Mammary epithelial cell (primary cell): ENCODE measurements at regions of chr1 and their contacts with region 1.

Region 1: GRCh38 chr1:46132529-46133180 is at the start of gene PIK3R3:
- DNase-seq: peak; percentile 99
- H3K4me3 ChIP-seq: peak within 1 kb of the TSS; percentile 76 to 99 (median 78)
- H3K27ac ChIP-seq: peak within 1 kb of the TSS; percentile 91
- H3K4me1 ChIP-seq: peaks cover 26% of the 10 kb centered on the region
- H3K27me3 ChIP-seq: no peaks in the 10 kb centered on the region
- CTCF ChIP-seq: no peak
- total RNA-seq, gene PIK3R3: 12.8 to 13.8 TPM

Region 2: GRCh38 chr1:45767035-45767434 is 365.6 kb before region 1 on chr1:
- CTCF ChIA-PET with region 1: no interaction called
- dilution Hi-C with region 1: no loop called
- in situ Hi-C with region 1: no loop called
- intact Hi-C with region 1: no loop called
- DNase-seq: no peak
- H3K4me3 ChIP-seq: no peak overlapping the region
- H3K27ac ChIP-seq: no peak overlapping the region
- H3K4me1 ChIP-seq: peaks cover 6% of the 10 kb centered on the region
- H3K27me3 ChIP-seq: no peaks in the 10 kb centered on the region
- CTCF ChIP-seq: no peak

Region 3: DNA sequence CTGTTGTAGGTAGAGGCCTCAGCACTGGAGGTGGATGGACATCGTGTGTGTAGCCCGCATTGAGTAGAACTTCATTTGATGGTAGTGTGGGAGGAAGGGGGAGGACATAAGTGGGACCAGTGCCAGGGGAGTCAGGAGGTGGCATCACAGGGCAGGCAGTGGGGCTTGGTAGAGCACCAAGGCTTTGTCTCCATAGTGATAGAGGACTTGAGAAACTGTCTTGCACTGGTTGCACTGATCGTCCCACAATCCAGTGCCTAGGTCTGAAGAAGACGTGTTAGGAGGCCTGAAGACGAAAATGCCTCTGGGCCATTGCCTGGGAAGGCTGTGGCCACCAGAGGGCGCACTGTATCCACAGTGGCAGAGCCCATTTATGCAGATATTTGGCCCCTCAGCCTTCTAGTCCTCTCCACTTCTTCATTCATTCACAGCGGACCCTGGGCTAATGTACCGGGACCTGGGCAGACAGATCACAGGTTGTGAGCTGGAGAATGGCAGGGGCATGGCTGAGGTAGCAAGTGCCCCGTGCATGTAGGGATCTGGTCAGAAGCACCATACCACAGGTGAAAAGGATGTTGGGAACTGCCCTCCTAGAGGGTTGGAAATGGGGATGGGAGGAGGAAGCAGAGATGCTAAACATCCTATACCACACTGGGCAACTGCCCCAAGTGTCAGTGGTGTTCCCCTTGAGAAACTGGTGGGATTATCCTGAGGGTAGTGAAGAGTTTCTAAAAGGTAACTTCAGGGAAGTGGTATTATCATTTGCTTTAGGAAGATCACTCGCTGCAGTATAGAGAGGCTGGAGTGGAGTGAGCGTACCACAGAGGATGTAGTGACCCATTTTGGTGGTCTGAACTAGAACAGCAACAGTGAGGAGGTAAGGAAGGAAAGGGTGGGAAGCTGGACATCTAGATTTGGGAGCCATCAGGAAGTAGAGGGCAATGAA is 95.5 kb before region 1 on chr1:
- CTCF ChIA-PET with region 1: no interaction called
- dilution Hi-C with region 1: loop called (anchors 5 kb)
- in situ Hi-C with region 1: no loop called
- intact Hi-C with region 1: loop called (anchors 1 kb)
- DNase-seq: peak; percentile 65
- H3K4me3 ChIP-seq: no peak overlapping the region
- H3K27ac ChIP-seq: no peak overlapping the region
- H3K4me1 ChIP-seq: peaks cover 8% of the 10 kb centered on the region
- H3K27me3 ChIP-seq: no peaks in the 10 kb centered on the region
- CTCF ChIP-seq: peak; percentile 96 to 98

Region 4: GRCh38 chr1:46043458-46044017 is 89.1 kb before region 1 on chr1:
- CTCF ChIA-PET with region 1: no interaction called
- dilution Hi-C with region 1: loop called (anchors 5 kb)
- in situ Hi-C with region 1: no loop called
- intact Hi-C with region 1: no loop called
- DNase-seq: no peak
- H3K4me3 ChIP-seq: no peak overlapping the region
- H3K27ac ChIP-seq: no peak overlapping the region
- H3K4me1 ChIP-seq: peaks cover 8% of the 10 kb centered on the region
- H3K27me3 ChIP-seq: no peaks in the 10 kb centered on the region
- CTCF ChIP-seq: no peak

Region 5: GRCh38 chr1:46077644-46078043 is 55.0 kb before region 1 on chr1:
- CTCF ChIA-PET with region 1: no interaction called
- dilution Hi-C with region 1: no loop called
- in situ Hi-C with region 1: no loop called
- intact Hi-C with region 1: loop called (anchors 2 kb)
- DNase-seq: peak; percentile 74
- H3K4me3 ChIP-seq: no peak overlapping the region
- H3K27ac ChIP-seq: no peak overlapping the region
- H3K4me1 ChIP-seq: peaks cover 16% of the 10 kb centered on the region
- H3K27me3 ChIP-seq: no peaks in the 10 kb centered on the region
- CTCF ChIP-seq: no peak

Region 6: DNA sequence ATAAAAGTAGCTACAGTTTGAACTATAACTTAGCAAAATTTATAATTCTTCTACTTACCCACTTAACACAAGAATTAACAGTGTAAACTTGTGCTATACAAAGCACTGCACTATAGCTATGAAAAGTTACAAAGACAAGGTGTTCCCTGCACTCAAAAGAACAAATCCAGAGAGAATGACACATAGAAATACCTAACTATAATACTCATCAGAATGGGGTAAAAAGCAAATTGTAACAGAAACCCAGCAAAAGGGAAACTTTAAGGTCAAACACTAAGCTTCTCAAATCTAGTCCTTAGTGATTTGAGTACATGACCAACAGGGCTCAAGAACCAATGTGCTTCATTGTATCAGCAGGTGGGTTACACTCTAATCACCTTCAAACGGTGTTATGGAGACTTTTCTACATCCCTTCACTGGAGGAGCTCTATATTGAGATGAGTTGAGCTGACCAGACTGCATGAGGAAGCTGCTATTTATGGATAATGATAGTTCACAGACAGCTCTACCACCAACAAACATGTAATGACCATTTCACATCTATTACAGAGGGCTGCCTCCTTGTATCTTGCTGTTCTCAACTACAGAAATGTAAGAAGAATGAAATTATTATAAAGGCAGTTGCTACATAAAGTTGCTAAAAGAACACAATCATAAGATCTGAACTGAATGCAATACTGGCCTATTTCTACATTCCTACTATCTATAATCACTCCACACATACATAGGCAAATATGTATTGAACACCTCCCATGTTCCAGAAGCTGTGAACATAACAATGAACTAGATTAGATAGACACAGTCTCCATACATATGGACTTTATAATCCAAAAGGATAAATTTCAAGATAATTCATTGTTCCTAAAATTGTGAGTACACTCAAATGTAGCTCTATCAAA is 47.9 kb before region 1 on chr1:
- CTCF ChIA-PET with region 1: interaction called, 28 read pairs
- dilution Hi-C with region 1: no loop called
- in situ Hi-C with region 1: no loop called
- intact Hi-C with region 1: loop called (anchors 2 kb)
- DNase-seq: peak; percentile 66
- H3K4me3 ChIP-seq: no peak overlapping the region
- H3K27ac ChIP-seq: peak overlapping the region; percentile 88
- H3K4me1 ChIP-seq: peaks cover 15% of the 10 kb centered on the region
- H3K27me3 ChIP-seq: no peaks in the 10 kb centered on the region
- CTCF ChIP-seq: no peak

Region 7: GRCh38 chr1:46223472-46223943 is 90.9 kb after region 1 on chr1:
- CTCF ChIA-PET with region 1: no interaction called
- dilution Hi-C with region 1: no loop called
- in situ Hi-C with region 1: no loop called
- intact Hi-C with region 1: no loop called
- DNase-seq: peak; percentile 92
- H3K4me3 ChIP-seq: no peak overlapping the region
- H3K27ac ChIP-seq: no peak overlapping the region
- H3K4me1 ChIP-seq: peaks cover 17% of the 10 kb centered on the region
- H3K27me3 ChIP-seq: no peaks in the 10 kb centered on the region
- CTCF ChIP-seq: peak; percentile 91 to 98